Gastrocnemius medialis (tissue), 4 donors: ENCODE measurements at regions of chr6 and their contacts with region 1.

Region 1: DNA sequence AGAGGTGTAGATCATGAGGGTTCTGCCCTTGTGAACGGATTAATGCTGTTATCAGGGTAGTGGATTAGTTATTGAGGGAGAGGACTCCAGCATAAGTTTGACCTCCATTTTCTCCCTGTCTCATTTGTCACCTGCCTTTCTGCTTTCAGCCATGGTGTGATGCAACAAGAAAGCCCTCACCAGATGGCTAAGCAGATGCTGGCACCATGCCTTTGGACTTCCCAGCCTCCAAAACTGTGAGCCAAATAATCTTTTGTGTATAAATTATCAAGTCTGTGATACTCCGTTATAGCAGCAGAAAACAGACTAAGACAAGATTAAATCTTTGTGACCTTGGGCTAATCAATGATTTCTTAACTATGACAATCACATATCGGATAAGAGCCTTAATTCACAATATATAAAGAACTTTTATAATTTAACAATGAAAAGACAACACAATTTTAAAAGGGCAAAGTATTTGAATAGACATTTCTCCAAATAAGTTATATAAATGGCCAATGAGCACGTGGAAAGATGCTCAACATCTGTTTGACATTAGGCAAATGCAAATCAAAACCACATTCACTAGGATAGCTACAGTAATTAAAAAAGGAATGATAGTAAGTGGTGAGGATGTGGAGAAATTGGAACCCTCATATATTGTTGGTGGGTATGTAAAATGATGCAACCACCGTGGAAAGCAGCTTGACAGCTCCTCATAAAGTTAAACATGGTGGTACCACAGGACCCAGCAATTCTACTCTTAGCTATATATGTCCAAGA is 45.3 kb upstream of the IFNGR1 start:
- DNase-seq: peak; percentile 18 to 55
- ATAC-seq: no peak
- H3K4me3 ChIP-seq: no peak overlapping the region
- H3K27ac ChIP-seq: no peak overlapping the region
- H3K4me1 ChIP-seq: peaks cover 10 to 26% of the 10 kb centered on the region in 2 donors
- H3K27me3 ChIP-seq: no peaks in the 10 kb centered on the region
- CTCF ChIP-seq: no peak
- POLR2A ChIP-seq: no peak

Region 2: GRCh38 chr6:137094411-137095008 is 170.0 kb before region 1 on chr6:
- in situ Hi-C with region 1: loop called in 1 of 4 experiments (anchors 5 kb)
- intact Hi-C with region 1: no loop called
- DNase-seq: peak; percentile 49 to 70
- ATAC-seq: peak; percentile 71 to 84
- H3K4me3 ChIP-seq: no peak overlapping the region
- H3K27ac ChIP-seq: no peak overlapping the region
- H3K4me1 ChIP-seq: no peaks in the 10 kb centered on the region
- H3K27me3 ChIP-seq: no peaks in the 10 kb centered on the region
- CTCF ChIP-seq: peak; percentile 56 to 75 (median 71)
- POLR2A ChIP-seq: no peak